Activated B cell treated with CpG ODN at 0.5 μM for 24 hours (primary cell): ENCODE measurements at regions of chr1 and their contacts with region 1.

Region 1: DNA sequence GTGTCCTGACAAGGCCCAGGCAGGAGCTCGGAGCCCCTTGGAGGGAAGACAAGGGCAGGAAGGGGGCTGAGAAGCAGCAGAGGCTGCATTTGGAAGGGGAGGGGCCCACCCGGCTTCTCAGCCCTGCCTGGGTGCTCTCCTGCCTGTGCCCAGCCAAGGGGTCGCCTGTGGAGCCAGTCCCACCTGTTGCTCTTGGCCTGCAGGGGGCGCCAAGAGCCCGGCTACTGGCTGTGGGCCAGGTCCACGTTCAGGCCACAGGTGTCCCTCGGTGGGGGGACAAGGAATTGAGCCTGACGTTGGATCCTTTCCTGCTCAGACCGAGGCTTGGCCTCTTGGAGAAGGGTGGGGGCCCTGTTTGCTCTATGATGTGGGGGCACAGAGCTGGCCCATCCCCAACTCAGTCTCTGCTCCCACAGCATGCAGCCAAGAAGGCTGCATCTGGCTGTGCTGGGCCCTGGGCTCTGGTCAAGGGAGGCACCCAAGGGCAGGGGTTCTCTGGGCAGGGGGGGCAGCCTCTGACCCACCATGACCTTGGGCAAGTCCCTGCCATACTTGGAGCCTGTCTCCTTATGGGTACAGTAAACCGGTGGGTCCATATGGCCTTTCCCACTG is 10.9 kb downstream of the WNT4 start:
- DNase-seq: peak; percentile 66
- ATAC-seq: peak; percentile 64
- H3K4me3 Mint-ChIP-seq: no peak overlapping the region
- H3K27ac Mint-ChIP-seq: no peak overlapping the region
- H3K4me1 Mint-ChIP-seq: no peaks in the 10 kb centered on the region
- H3K27me3 Mint-ChIP-seq: no peaks in the 10 kb centered on the region
- CTCF ChIP-seq: peak; percentile 73

Region 2: GRCh38 chr1:22275721-22276395 is 143.9 kb after region 1 on chr1:
- CTCF ChIA-PET with region 1: interaction called, 4 read pairs
- POLR2A ChIA-PET with region 1: no interaction called
- intact Hi-C with region 1: loop called (anchors 1 kb)
- DNase-seq: peak; percentile 37
- ATAC-seq: peak; percentile 45
- H3K4me3 Mint-ChIP-seq: no peak overlapping the region
- H3K27ac Mint-ChIP-seq: no peak overlapping the region
- H3K4me1 Mint-ChIP-seq: no peaks in the 10 kb centered on the region
- H3K27me3 Mint-ChIP-seq: peaks cover 20% of the 10 kb centered on the region
- CTCF ChIP-seq: no peak

Region 3: GRCh38 chr1:22317226-22317919 is 185.4 kb after region 1 on chr1:
- CTCF ChIA-PET with region 1: no interaction called
- POLR2A ChIA-PET with region 1: no interaction called
- intact Hi-C with region 1: loop called (anchors 1 kb)
- DNase-seq: no peak
- ATAC-seq: no peak
- H3K4me3 Mint-ChIP-seq: no peak overlapping the region
- H3K27ac Mint-ChIP-seq: no peak overlapping the region
- H3K4me1 Mint-ChIP-seq: no peaks in the 10 kb centered on the region
- H3K27me3 Mint-ChIP-seq: peaks cover 20% of the 10 kb centered on the region
- CTCF ChIP-seq: no peak

Region 4: GRCh38 chr1:22416555-22417454 is 284.8 kb after region 1 on chr1:
- CTCF ChIA-PET with region 1: interaction called, 14 read pairs
- POLR2A ChIA-PET with region 1: no interaction called
- intact Hi-C with region 1: loop called (anchors 1 kb)
- DNase-seq: peak; percentile 50
- ATAC-seq: peak; percentile 66
- H3K4me3 Mint-ChIP-seq: no peak overlapping the region
- H3K27ac Mint-ChIP-seq: no peak overlapping the region
- H3K4me1 Mint-ChIP-seq: peaks cover 5% of the 10 kb centered on the region
- H3K27me3 Mint-ChIP-seq: peaks cover 36% of the 10 kb centered on the region
- CTCF ChIP-seq: no peak